ENCODE measurements at regions of chr20 and their contacts with region 1.

Region 1: DNA sequence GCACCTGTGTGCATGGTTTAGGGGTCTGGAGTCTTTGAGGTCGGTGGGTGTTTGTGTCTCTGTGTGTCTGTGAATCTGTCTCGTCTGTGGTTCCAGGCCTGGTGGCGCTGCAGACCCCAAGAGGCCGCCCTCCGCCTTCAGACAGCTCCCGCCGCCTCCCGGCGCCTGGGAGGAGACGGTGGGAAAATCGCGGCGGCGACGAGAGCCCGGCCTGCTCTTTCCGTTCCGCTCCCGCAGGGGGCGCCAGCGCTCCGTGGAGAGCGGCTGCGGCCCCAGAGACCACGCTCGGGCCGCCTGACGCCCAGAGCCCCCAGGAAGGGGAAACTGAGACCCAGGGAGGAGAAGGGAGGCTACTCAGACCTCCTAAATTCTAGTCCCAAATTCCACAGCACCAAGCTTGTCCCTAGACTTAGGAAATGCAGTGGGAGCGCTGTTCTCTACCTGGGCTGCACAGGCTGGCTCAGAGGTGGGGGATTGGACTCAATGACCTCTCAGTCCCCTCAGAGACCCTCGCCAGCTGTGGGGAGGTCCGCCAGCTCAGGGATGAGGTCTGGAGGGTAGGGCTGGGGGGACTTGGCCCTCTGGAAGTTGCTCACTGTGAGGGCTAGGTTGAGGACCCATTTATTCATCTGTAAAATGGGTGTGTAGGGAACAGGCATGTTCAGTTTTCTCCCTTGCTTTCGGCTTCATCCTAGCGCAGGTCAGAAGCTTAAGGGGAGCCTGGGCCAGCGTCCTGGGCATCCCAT is 36.9 kb upstream of the BLCAP start:
- DNase-seq: no peak
- ATAC-seq: peak; percentile 96
- H3K4me3 ChIP-seq: no peak overlapping the region
- H3K27ac ChIP-seq: no peak overlapping the region
- H3K4me1 ChIP-seq: no peaks in the 10 kb centered on the region; the same call in 1 of the 2 replicates
- H3K27me3 ChIP-seq: peaks cover 53% of the 10 kb centered on the region
- CTCF ChIP-seq: peak; percentile 95
- POLR2A ChIP-seq: no peak
- RAD21 ChIP-seq: peak; percentile 95

Region 2: DNA sequence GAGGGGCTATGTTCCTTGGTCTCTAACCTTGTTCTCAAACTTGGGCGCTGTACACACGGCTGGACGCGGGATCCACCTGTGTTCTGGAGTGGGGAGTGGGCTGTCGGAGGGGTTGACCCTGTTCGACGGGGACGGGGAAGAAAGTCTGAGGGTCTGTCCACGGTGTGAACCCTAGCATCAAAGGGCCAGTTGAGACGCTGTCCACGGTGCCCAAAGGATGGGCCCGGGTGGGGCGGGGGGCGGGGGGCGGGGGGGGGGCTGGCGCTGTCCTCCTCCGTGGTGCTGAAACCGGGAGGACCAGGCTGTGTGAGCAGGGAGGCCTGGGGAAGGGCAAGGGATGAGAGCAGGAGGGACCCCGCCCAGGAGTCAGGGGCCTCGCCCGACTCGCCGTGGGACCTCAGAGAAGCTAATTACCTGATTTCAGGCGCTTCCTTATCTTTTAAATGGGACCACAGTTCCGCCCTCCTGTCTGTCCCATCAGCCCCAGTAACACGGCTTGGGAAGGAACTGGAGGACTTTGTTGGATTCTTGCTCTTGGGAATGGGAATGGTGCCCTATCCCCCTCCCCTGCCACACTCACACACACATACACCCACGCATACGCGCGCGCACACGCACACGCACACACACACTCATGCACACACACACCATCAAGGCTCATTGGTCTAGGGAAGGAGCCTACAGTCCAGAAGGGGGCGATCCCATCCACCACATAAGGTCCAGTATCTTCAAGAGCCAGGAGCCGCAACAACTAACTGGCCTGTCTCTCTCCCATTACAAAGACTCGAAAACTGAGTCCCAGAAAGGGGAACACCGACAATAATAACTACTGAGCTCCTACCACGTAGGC is 337.3 kb after region 1 on chr20:
- CTCF ChIA-PET with region 1: interaction called, 4 read pairs
- POLR2A ChIA-PET with region 1: no interaction called
- dilution Hi-C with region 1: no loop called
- in situ Hi-C with region 1: no loop called
- intact Hi-C with region 1: loop called (anchors 2 kb)
- DNase-seq: peak; percentile 60
- ATAC-seq: peak; percentile 46
- H3K4me3 ChIP-seq: no peak overlapping the region
- H3K27ac ChIP-seq: no peak overlapping the region
- H3K4me1 ChIP-seq: no peaks in the 10 kb centered on the region; the same call in 1 of the 2 replicates
- H3K27me3 ChIP-seq: peaks cover 75% of the 10 kb centered on the region
- CTCF ChIP-seq: peak; percentile 42
- POLR2A ChIP-seq: no peak
- RAD21 ChIP-seq: peak; percentile 50; the same call in 1 of the 2 replicates

Region 3: DNA sequence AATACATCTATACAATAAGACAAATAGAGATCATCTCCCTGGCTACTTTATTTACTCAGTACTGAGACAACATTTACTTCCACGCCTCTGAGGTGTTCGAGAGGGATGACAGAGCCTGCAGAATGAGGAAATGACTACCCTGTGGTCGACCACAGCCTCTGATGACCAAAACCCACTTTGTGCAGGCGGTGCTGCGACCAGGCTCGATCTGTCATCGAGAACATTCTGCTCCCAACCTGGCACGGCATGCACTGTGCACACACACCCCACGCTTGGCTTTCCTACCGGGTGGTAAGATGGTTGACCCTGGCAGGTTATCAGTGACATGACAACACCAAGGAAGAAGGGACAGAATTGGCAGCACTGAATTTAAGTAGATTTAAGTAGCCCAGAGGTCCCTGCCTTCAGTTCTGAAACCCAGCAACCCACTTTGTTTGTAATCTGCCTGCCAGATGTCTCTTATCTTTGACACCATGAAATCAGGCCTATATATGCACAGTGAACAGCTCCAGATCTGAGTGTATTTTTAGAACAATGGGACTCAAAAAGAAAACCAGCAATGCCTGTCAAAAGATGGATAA is 426.1 kb after region 1 on chr20:
- CTCF ChIA-PET with region 1: interaction called, 3 read pairs
- POLR2A ChIA-PET with region 1: no interaction called
- dilution Hi-C with region 1: no loop called
- in situ Hi-C with region 1: loop called (anchors 5 kb)
- intact Hi-C with region 1: loop called (anchors 1 kb)
- DNase-seq: peak; percentile 78
- ATAC-seq: peak; percentile 36
- H3K4me3 ChIP-seq: no peak overlapping the region
- H3K27ac ChIP-seq: peak overlapping the region; percentile 12; the same call in 1 of the 2 replicates
- H3K4me1 ChIP-seq: peaks cover 29% of the 10 kb centered on the region
- H3K27me3 ChIP-seq: no peaks in the 10 kb centered on the region
- CTCF ChIP-seq: no peak
- POLR2A ChIP-seq: no peak
- RAD21 ChIP-seq: no peak

Region 4: GRCh38 chr20:38290832-38291581 is 726.4 kb after region 1 on chr20:
- CTCF ChIA-PET with region 1: no interaction called
- POLR2A ChIA-PET with region 1: no interaction called
- dilution Hi-C with region 1: no loop called
- in situ Hi-C with region 1: no loop called
- intact Hi-C with region 1: loop called (anchors 1 kb)
- DNase-seq: peak; percentile 95
- ATAC-seq: peak; percentile 86
- H3K4me3 ChIP-seq: no peak overlapping the region
- H3K27ac ChIP-seq: no peak overlapping the region
- H3K4me1 ChIP-seq: peaks cover 17% of the 10 kb centered on the region
- H3K27me3 ChIP-seq: peaks cover 4% of the 10 kb centered on the region
- CTCF ChIP-seq: peak; percentile 69
- POLR2A ChIP-seq: no peak
- RAD21 ChIP-seq: peak; percentile 71

Region 5: DNA sequence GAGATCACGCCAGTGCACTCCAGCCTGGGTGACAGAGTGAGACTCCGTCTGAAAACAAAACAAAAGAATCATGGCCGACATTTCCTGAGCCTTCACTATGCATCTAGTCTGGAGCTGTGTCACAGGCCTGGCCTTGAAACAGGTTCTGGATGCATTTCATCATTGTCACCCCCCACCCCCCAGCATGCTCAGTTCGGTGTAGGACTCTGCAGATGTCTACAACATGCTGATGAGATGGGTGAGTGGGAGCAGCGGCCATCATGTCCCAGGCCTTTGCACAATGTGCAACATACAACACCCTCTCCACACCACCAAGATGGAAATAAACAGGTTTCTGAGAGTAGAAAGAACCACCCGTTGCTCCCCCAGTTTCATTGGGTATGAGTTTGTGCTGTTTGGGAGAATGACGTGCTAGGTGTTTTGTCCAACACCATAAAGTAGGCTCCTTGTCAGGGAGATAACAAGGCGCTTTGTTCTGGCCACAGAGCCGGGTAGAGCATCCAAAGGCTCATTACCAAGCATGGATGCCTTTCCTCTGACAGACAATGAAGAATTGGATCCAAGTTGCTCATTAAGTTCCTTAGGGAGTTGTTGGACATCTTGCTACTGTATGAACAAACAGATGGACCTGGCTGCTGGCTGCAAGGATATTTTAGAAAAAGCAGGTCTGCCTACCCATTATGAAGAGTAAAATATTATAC is 848.5 kb after region 1 on chr20:
- CTCF ChIA-PET with region 1: interaction called, 6 read pairs
- POLR2A ChIA-PET with region 1: no interaction called
- dilution Hi-C with region 1: no loop called
- in situ Hi-C with region 1: no loop called
- intact Hi-C with region 1: loop called (anchors 2 kb)
- DNase-seq: no peak
- ATAC-seq: no peak
- H3K4me3 ChIP-seq: no peak overlapping the region
- H3K27ac ChIP-seq: no peak overlapping the region
- H3K4me1 ChIP-seq: no peaks in the 10 kb centered on the region
- H3K27me3 ChIP-seq: no peaks in the 10 kb centered on the region
- CTCF ChIP-seq: no peak
- POLR2A ChIP-seq: no peak
- RAD21 ChIP-seq: no peak

Measured in IMR-90 (cell line).